Activated CD8-positive, alpha-beta memory T cell treated with anti-CD3 and anti-CD28 coated beads, Interleukin-2, amount 10 ng/mL, durations not matched to agents 7 days and 5 days (primary cell): ENCODE measurements at regions of chr16 and their contacts with region 1.

Region 1: DNA sequence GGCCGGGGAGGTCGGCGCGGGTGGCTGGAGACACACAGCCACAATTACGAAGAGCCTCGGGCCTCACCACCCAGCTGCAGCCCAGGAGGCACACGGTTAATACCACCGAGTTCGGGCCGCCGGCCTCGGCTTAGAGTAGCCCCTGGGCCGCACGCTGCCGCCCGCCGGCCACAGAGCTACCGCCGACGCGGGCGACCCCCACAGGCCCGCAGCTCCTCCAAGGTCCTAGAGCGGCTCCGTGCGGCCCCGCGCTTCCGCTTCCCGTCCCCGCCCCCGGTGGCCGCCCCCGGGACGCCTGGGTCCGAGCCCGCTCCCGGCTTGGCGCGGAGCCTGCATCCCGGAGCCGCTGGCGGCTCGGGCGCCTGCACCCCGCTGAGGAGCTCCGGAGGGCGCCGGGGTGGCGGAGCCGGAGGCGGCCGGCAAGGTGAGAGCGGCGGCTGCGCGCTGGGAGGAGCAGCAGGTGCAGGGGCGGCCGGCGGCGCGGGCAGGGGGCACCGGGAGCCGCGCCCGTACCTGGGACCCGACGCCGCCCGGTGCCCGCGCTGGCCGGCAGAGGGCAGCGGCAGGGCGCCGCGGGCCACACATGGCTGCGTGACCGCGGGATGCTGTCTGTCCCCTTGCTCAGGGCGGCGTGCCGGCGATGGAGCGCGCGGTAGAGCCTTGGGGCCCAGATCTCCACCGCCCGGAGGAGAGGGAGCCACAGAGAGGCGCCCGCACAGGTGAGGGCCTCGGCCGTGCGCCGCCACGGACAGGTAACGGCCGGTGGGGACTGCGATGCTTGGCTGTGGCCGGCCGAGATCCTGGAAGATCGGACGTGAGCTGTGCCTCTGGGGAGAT is at the start of gene ZNF48:
- DNase-seq: peak; percentile 67
- ATAC-seq: peak; percentile 78
- H3K4me3 Mint-ChIP-seq: peak within 1 kb of the TSS; percentile 79
- H3K27ac Mint-ChIP-seq: peak within 1 kb of the TSS; percentile 70
- H3K4me1 Mint-ChIP-seq: peaks cover 44% of the 10 kb centered on the region
- H3K27me3 Mint-ChIP-seq: peaks cover 2% of the 10 kb centered on the region
- total RNA-seq, gene ZNF48: 13.7 to 15.6 TPM

Region 2: GRCh38 chr16:30335598-30336474 is 59.5 kb before region 1 on chr16:
- CTCF ChIA-PET with region 1: no interaction called
- DNase-seq: peak; percentile 56
- ATAC-seq: peak; percentile 1
- H3K4me3 Mint-ChIP-seq: peak overlapping the region; percentile 75
- H3K27ac Mint-ChIP-seq: peak overlapping the region; percentile 78
- H3K4me1 Mint-ChIP-seq: peaks cover 21% of the 10 kb centered on the region
- H3K27me3 Mint-ChIP-seq: no peaks in the 10 kb centered on the region

Region 3: GRCh38 chr16:30382111-30382881 is 13.1 kb before region 1 on chr16 and contains the start of gene SEPTIN1:
- CTCF ChIA-PET with region 1: interaction called, 20 read pairs
- DNase-seq: peak; percentile 94
- ATAC-seq: peak; percentile 46
- H3K4me3 Mint-ChIP-seq: peak within 1 kb of the TSS; percentile 91
- H3K27ac Mint-ChIP-seq: peak within 1 kb of the TSS; percentile 98
- H3K4me1 Mint-ChIP-seq: peaks cover 47% of the 10 kb centered on the region
- H3K27me3 Mint-ChIP-seq: no peaks in the 10 kb centered on the region
- total RNA-seq, gene SEPTIN1: 259 to 278 TPM

Region 4: DNA sequence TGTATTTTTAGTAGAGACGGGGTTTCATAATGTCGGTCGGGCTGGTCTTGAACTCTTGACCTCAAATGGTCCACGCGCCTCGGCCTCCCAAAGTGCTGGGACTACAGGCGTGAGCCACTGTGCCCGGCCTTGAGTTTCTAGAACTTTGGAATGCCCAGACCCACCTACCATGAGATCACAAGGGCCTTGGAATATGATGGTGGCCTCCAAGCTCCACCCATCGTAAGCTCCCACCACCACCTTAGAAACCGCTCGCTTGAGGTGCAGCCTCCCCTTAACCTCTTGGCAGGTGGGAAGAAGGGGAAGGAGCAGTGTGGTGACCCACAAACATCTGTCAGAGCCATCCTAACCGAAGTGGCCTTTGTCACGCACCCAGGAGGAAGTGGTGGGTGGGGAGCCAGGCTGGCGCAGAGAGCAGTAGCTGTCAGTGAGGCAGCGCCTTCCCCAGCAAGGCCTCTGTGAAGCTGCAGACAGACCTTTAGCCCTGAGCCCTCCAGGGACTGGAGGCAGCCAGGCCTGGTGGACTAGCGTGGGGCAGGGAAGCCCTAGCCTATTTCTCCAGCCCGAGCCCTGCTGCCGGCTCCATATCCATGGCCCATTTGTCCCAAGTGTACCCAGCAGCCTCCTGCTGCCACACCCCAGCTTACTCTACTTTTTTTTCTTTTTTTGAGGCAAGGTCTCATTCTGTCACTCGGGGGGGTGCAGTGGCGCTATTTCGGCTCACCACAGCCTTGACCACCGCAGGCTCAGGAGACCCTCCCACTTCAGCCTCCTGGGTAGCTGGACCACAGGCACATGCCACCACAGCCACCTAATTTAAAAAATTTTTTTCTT is 63.4 kb after region 1 on chr16:
- CTCF ChIA-PET with region 1: no interaction called
- DNase-seq: peak; percentile 97
- ATAC-seq: peak; percentile 96
- H3K4me3 Mint-ChIP-seq: peak overlapping the region; percentile 53
- H3K27ac Mint-ChIP-seq: peak overlapping the region; percentile 96
- H3K4me1 Mint-ChIP-seq: peaks cover 64% of the 10 kb centered on the region
- H3K27me3 Mint-ChIP-seq: peaks cover 2% of the 10 kb centered on the region